Heart left ventricle (tissue), 16 donors: ENCODE measurements at regions of chr7 and their contacts with region 1.

Region 1: GRCh38 chr7:100691676-100692577 is 2.1 kb downstream of the GIGYF1 start:
- DNase-seq: peak; percentile 76 to 91 (median 83)
- ATAC-seq: peak; percentile 70 to 86 (median 82)
- H3K4me3 ChIP-seq: peak overlapping the region in 9 of 12 donors; percentile 74 to 100 (median 91)
- H3K27ac ChIP-seq: peak overlapping the region in 9 of 12 donors; percentile 12 to 90 (median 35)
- H3K4me1 ChIP-seq: peaks cover 5 to 64% (median 46%) of the 10 kb centered on the region in 12 donors
- H3K27me3 ChIP-seq: no peaks in the 10 kb centered on the region
- CTCF ChIP-seq: peak; percentile 83 to 93 (median 88)
- POLR2A ChIP-seq: no peak

Region 2: DNA sequence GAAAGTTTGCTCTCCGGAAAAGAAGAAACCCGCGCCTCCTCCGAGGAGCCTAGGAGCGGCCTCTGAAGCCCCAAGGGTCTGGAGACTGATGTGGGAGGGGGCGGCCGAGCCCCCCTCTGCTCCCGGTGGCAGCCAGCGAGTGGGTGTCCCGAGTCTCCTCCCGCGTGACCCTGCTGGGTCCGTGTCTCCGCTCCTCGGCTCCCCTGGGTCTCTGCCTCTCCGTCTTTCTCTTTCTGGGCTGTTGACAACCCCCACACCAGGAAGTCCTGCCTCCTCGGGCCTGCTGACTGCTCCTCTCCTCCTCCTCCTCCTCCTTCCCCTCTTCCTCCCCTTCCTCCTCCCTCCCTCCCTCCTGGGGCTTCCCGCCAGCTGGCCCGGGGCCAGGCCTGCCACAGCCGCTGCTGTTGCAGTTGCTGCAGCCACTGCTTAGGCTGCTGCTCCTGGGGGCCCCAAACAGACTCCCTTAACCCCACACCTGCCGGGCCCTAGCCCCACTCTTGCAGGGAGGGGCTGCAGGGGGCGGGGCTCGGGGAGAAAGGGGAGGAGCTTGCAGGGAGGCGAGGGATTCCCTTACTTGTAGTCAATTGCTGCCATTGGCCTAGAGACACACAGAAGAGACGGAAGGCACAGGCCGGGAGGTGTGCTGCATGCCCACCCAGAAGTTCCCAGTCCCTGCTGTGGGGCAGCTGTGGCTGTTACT is 212.8 kb before region 1 on chr7 and contains the start of gene TSC22D4:
- intact Hi-C with region 1: loop called in 2 of 10 experiments (anchors 10 kb)
- DNase-seq: peak; percentile 95 to 98 (median 95)
- ATAC-seq: peak; percentile 82 to 92 (median 92)
- H3K4me3 ChIP-seq: peak within 1 kb of the TSS; percentile 66 to 100 (median 98)
- H3K27ac ChIP-seq: peak within 1 kb of the TSS; percentile 81 to 99 (median 96)
- H3K4me1 ChIP-seq: peaks cover 0 to 62% (median 42%) of the 10 kb centered on the region in 12 donors
- H3K27me3 ChIP-seq: no peaks in the 10 kb centered on the region
- CTCF ChIP-seq: peak in 1 of 12 donors; percentile 10
- POLR2A ChIP-seq: peak; percentile 57 to 88
- total RNA-seq, gene TSC22D4: 41.8 to 55.5 (median 49.0) TPM

Region 3: DNA sequence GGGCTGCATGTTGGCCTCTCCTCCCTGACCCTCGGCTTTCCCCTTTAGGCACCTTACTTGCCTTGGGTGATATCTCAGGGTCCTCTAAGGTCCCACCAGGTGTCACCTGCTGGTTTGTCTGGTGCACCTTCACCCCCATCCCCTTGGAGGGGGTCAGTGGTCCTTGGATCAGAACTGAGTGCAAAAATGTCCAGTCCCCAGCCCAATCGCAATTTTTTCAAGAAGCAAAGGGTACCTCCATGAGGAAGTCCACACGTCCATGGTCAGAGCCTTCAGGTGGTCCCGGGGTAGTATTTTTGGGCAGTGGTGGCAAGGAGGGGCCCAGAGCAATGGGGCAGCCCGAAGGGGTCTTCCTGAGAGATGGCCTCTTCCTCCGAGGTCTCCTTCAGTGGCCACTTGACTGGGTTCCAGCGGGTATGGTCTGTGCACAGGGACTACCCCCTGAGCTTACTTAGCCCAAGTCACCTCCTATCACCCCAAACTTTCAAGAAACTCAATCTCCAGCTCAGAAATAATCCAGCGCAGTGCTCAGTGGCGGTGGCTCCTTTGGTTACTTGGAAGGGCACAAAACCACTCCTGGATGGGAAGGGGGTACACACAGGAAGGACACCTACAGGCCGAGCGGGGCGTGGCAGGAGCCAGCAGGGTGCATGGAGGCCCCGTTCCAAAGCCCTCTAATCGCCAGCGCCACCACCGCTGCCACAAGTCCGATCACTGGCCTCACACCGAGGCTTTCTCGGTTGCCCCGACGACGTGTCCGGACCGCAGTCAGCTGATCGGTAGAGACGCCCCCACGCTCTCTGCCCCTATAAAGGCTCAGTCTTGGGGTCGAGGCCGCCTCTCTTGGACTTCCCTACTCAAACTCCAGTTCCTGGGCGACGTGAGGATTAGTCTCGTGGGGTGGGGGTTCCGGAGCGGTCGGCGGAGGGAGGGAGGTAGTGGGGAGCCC is 122.8 kb before region 1 on chr7:
- intact Hi-C with region 1: loop called in 9 of 10 experiments (anchors 2 to 5 kb)
- DNase-seq: peak in 3 of 5 donors; percentile 45 to 72 (median 56)
- ATAC-seq: peak; percentile 28 to 56 (median 34)
- H3K4me3 ChIP-seq: peak overlapping the region in 11 of 12 donors; percentile 2 to 50 (median 40)
- H3K27ac ChIP-seq: peak overlapping the region in 1 of 12 donors; percentile 24
- H3K4me1 ChIP-seq: peaks cover 0 to 26% (median 13%) of the 10 kb centered on the region in 12 donors
- H3K27me3 ChIP-seq: no peaks in the 10 kb centered on the region
- CTCF ChIP-seq: peak in 9 of 12 donors; percentile 8 to 42 (median 32)
- POLR2A ChIP-seq: no peak

Region 4: DNA sequence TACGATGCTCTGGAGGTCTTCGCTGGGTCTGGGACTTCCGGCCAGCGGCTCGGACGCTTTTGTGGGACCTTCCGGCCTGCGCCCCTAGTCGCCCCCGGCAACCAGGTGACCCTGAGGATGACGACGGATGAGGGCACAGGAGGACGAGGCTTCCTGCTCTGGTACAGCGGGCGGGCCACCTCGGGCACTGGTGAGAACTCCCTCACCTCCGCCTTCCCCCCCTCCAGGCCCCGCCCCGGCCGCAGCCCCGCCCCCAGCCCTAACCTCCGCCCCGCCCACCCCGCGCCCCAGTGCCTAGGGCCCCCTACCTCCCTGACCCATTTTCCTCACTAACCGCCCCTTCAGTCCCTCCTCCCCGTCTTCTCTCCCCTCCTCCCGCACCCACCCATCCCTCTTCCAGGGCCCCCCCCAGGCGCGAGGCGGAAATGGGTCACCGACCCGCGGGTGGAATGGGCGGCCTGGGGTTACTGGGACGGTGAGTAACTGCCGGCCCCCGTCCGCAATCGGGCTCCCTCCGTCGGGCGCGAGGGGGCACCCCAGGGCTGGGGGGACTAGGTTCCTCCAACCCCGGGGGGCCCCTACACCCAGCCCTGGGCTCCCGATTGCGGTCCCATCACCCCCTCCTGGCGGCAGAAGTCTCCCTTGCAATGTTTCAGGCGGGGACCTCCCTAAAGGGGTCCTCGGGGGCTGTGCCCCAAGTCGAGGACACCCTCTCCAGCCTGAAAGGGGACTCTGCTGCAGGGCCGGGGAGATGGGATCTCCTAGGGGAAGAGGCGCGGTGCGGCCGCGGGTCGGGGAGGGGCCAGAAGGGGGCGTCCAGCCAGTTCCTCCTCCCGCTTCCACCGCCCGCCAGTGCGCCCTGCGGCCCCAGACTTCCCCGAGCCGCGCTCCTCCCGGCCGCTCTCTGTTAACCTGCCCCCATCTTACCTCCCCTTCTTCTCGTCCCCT is 87.6 kb before region 1 on chr7:
- intact Hi-C with region 1: loop called in 3 of 10 experiments (anchors 2 to 5 kb)
- DNase-seq: peak; percentile 76 to 92 (median 83)
- ATAC-seq: peak; percentile 67 to 82 (median 74)
- H3K4me3 ChIP-seq: peak overlapping the region; percentile 48 to 96 (median 76)
- H3K27ac ChIP-seq: peak overlapping the region; percentile 2 to 90 (median 79)
- H3K4me1 ChIP-seq: peaks cover 0 to 34% (median 12%) of the 10 kb centered on the region in 12 donors
- H3K27me3 ChIP-seq: no peaks in the 10 kb centered on the region
- CTCF ChIP-seq: peak; percentile 24 to 64 (median 52)
- POLR2A ChIP-seq: peak in 1 of 2 donors; percentile 64

Region 5: DNA sequence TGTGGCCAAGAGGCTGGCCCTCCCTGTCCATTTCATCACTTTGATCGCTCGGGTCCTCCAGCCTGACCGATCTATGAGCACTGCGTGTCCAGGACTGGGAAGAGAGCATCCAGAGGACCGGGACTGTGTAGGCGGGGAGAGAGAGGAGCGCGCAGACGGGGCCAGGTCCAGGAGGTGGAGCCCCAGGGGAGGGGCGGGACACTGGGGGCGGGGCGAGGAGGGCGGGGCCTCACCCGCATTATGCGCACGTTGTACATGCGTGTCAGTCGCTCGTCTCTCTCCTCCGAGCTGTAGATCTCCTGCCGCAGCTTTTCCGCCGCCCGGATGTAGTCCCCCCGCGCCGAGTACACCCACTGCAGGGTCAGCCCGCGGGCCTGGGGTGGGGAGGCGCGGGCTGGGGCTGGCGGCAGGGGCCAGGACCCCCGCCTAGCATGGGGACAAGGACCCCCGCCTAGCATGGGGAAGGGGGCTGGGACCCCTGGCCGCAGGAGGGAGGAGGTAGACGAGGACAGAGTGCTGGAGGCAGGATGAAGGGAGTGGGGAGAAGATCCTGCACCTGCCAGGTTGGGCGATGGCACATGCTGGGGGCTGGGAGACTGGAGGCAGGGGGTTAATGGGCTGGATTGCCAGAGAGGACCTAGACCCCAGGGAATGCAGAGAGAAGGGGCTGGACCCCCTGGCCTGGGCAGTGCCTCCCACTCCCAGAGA is 65.2 kb before region 1 on chr7:
- intact Hi-C with region 1: loop called in 1 of 10 experiments (anchors 5 kb)
- DNase-seq: peak; percentile 78 to 91 (median 84)
- ATAC-seq: peak; percentile 89 to 99 (median 96)
- H3K4me3 ChIP-seq: peak overlapping the region in 9 of 12 donors; percentile 26 to 51 (median 43)
- H3K27ac ChIP-seq: peak overlapping the region in 1 of 12 donors; percentile 67
- H3K4me1 ChIP-seq: peaks cover 0 to 12% (median 4%) of the 10 kb centered on the region in 12 donors
- H3K27me3 ChIP-seq: no peaks in the 10 kb centered on the region
- CTCF ChIP-seq: no peak
- POLR2A ChIP-seq: no peak

Region 6: GRCh38 chr7:100655908-100656674 is 35.8 kb before region 1 on chr7 and contains the start of gene ACTL6B:
- intact Hi-C with region 1: no loop called
- DNase-seq: peak; percentile 57 to 83 (median 72)
- ATAC-seq: peak in 3 of 4 donors; percentile 80 to 84 (median 83)
- H3K4me3 ChIP-seq: no peak within 1 kb of the TSS
- H3K27ac ChIP-seq: no peak within 1 kb of the TSS
- H3K4me1 ChIP-seq: peaks cover 0 to 7% (median 0%) of the 10 kb centered on the region in 12 donors
- H3K27me3 ChIP-seq: peaks cover 16 to 84% (median 37%) of the 10 kb centered on the region in 9 donors
- CTCF ChIP-seq: no peak
- POLR2A ChIP-seq: no peak
- total RNA-seq, gene ACTL6B: not detected